ENCODE measurements at regions of chr15 and their contacts with region 1.

Region 1: DNA sequence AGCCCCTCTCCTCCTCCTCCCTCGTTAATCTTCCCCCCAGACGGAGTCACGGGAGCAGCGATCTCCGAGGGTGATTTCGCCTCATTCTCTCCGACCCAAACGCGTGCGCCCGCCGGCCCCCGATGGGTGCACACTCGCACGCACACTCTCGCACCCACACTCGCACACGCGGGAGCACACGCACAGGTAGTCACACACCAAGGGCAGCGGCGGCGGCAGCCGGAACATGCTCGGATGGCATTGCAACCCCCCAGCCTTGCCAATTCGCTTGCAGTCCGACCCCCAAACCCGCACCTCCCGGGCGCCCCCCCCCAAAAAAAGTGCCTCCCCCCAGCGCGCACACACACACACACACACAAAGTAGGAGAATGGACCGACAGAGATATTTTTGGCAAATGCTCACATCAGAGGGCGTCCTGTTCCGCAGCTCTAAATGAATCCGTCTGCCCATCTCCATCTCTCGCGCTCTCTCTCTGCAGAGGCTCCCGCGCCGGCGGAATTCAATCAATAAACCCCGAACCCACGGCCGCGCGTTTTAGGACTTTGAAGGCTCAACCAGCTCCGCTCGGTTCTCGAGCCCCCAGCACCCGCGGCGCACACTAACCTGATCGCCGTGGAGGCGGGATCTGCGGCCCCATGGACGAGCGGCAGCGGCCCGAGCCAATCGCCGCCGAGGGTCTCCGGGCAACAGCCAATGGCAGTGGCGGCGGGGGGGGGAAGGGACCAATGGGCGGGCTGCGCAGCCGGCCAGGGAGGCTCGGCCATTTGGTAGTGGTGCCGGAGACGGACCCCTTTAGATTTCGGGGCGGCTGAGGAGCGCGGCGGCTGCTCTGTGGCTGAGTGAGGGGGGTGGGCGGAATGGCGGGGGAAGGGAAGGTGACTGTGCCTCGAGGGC is at the start of gene ANP32A:
- DNase-seq: peak; percentile 97
- ATAC-seq: peak; percentile 85
- total RNA-seq, gene ANP32A: 134 TPM

Region 2: GRCh38 chr15:68559345-68560310 is 260.9 kb before region 1 on chr15:
- intact Hi-C with region 1: loop called (anchors 5 kb)
- DNase-seq: peak; percentile 93
- ATAC-seq: peak; percentile 93

Region 3: GRCh38 chr15:68704496-68705021 is 116.0 kb before region 1 on chr15:
- intact Hi-C with region 1: loop called (anchors 2 kb)
- DNase-seq: no peak
- ATAC-seq: peak; percentile 78

Region 4: DNA sequence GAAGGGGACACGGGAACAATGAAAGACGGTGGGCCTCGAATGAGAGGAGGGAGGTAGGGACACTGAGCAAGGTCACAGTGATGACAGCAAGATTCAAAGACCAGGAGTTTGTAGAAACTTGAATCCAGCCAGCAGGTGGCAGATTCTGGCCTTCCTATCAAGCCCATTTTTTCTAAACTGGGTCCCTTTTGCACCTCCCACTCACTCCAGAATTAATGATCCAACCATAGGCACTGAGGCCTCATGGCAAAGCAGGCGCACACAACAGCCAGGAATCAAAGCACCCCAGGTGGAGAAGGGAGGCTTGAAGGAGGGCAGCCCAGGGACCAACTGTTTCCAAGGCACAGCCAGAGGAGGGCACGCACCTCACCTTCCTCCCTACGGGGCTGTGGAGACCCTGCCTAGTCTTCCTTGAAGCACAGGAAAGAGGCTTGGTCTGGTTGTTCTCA is 90.0 kb before region 1 on chr15:
- intact Hi-C with region 1: loop called (anchors 2 kb)
- DNase-seq: no peak
- ATAC-seq: peak; percentile 33

Region 5: DNA sequence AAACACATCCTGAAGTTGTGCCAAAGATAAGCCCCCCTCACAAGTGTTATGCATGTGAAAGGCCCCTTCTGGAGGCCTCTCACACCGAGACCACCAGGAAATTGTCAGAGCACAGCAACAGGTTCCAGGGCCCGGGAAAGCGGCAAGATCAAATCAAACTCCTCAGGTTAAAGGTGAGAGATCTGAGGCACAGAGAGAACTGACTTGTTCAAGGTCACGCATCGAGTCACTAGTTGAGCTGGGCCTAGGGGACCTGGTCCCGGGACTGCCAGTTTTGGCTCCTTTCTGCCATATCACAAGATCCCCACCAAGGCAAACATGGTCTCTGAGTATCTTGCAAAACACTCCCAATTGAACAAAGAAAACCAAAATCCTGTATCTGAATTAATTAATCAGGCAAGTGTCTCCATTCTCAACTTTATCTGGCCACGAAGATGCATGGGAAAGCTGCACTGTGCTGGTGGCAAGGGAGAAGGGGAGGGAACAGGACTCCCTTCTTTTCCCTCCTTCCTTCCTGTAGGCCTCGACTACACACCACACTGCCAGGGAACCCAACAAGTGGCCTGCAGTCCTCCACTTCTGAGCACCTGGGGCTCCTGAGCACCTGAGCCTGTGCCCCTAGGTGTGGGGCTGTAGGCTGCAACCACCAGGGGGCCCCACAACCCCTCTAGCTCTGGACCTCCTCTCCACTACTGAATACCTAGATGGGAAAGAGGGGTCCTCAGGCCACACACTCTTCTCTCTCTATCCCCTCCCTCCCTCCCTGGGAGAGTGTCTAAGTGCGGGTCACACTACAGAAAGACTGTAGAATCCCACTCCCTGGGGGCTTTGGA is 37.1 kb before region 1 on chr15:
- intact Hi-C with region 1: loop called (anchors 5 kb)
- DNase-seq: peak; percentile 76
- ATAC-seq: no peak

Region 6: GRCh38 chr15:68795298-68795848 is 25.2 kb before region 1 on chr15:
- intact Hi-C with region 1: loop called (anchors 2 kb)
- DNase-seq: peak; percentile 97
- ATAC-seq: peak; percentile 94

Region 7: DNA sequence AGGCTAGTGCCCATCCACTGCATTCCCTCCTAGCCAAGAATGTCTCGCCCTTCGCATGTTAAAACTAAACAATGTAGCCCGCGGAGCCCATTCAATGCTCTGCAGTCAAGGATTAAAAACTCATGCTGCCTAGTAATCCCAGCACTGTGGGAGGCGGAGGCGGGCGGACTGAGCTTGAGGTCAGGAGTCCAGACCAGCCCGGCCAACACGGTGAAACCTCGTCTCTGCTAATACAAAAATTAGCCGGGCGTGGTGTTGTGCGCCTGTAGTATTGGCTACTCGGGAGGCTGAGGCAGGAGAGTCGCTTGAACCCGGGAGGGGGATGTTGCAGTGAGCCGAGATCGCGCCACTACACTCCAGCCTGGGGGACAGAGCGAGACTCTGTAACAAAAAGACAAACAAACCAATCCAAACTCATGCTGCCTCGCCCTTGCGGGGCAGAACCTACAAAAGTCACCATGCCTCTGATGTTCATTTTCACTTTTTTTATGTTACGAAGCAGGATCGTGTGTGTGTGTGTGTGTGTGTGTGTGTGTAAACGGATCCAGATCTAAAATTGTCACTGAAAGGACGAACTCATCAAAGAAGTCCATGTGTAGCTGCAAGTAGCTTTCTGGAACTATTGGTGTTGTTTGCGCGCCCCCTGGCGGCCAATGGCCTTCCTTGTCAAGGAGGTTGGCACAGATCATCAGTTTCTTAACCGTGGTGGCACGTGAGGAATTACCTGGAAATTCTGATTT is 55.0 kb after region 1 on chr15:
- intact Hi-C with region 1: loop called (anchors 5 kb)
- DNase-seq: peak; percentile 96
- ATAC-seq: peak; percentile 87

Region 8: DNA sequence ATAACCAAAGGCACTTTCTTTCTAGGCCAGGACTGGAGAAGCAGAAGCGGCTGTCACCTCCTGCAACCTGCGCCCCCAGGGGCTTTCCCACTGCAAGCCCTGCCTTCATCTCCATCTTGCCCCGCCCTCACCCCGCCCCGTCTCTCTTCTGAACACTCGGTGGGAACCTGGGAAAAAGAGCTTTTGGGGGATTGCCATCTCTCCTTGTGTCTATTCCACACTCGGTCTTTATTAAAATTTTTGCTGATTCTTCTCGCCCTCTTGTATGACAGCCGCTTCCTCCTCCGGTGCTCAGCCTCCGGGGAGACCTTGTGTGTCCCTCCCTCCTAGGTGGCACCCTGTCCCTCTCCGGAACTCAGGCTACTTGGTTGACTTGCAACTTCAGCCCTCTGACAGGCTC is 67.9 kb after region 1 on chr15:
- intact Hi-C with region 1: no loop called
- DNase-seq: no peak
- ATAC-seq: no peak

Measured in Right ventricle myocardium inferior (tissue), 1 donor.